A673 (cell line): ENCODE measurements at regions of chr12 and their contacts with region 1.

Region 1: GRCh38 chr12:54603173-54603814 is 14.8 kb upstream of the PPP1R1A start:
- DNase-seq: peak; percentile 94
- H3K4me3 ChIP-seq: peak overlapping the region; percentile 16
- H3K27ac ChIP-seq: peak overlapping the region; percentile 90
- H3K4me1 ChIP-seq: peaks cover 33% of the 10 kb centered on the region
- H3K27me3 ChIP-seq: no peaks in the 10 kb centered on the region
- CTCF ChIP-seq: peak; percentile 93

Region 2: DNA sequence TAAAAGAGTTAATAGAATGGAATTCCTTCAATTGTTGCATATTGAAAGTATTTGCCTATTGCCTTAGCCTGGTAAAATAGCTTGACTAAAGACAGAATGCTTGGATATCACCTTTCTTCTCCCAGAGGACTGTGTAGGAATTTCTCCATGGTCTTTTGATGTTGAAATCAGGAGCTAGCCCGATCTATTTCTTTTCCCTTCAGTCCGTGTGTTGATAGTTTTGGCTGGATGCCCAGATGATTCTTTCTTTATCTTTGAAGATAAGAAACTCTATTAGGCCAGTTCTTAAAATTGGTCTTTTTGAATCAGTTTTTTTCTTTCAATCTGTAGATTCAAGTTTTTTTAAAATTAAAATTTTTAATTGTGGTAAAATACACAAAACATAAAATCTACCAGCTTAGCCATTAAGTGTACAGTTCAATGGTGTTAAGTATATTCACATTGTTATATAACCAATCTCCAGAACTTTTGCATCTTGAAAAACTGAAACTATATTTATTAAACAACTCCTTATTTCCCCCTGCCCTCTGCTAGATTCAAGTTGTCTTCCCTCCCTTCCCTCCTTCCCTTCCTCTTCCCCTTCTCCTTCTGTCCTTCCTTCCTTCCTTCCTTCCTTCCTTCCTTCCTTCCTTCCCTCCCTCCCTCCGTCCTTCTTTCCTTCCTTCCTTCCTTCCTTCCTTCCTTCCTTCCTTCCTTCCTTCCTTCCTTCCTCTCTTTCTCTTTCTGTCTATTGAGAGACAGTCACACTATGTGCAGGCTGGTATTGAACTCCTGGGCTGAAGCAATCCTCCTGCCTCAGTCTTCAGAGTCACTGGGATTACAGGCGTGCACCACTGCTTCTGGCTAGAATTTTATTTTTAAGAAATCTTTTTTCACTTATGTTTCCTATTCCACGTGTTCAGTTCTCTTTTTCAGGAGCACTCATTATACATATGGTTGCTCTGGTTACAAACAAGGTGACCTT is 21.3 kb after region 1 on chr12:
- CTCF ChIA-PET with region 1: interaction called, 3 read pairs
- POLR2A ChIA-PET with region 1: interaction called, 3 read pairs
- intact Hi-C with region 1: loop called (anchors 1 kb)
- DNase-seq: peak; percentile 92
- H3K4me3 ChIP-seq: peak overlapping the region; percentile 4
- H3K27ac ChIP-seq: peak overlapping the region; percentile 98
- H3K4me1 ChIP-seq: peaks cover 59% of the 10 kb centered on the region
- H3K27me3 ChIP-seq: no peaks in the 10 kb centered on the region
- CTCF ChIP-seq: no peak

Region 3: DNA sequence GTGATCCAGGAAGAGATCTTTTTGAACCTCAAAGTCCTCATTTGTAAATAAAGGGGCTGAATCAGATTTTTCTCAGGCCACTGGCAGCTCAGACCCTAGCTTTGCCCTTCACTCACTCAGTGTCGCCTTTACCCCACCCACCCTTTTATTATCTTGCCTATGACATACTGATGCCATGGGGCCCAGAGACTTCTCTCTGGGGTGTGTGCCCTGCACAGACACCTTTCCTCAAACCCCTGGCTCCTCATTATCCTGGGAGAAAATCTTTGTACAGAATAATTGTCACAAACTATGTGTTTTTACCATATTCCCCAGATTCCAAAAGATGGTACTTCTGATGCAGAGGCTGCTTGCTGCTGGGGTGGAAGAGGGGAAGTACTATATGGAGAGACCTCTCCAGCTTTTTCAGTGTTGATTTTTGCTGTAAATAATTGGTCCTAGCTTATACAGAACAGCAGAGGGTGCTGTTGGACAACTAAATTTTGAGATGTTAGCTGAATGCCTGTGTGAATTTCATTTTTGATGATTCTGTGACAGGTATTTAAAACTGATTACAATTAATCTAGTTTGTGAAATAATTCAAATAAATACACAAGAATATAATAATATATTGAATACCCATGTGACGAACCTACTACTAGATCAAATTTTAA is 98.8 kb after region 1 on chr12:
- CTCF ChIA-PET with region 1: no interaction called
- POLR2A ChIA-PET with region 1: no interaction called
- intact Hi-C with region 1: loop called (anchors 5 kb)
- DNase-seq: peak; percentile 70
- H3K4me3 ChIP-seq: no peak overlapping the region
- H3K27ac ChIP-seq: no peak overlapping the region
- H3K4me1 ChIP-seq: peaks cover 13% of the 10 kb centered on the region
- H3K27me3 ChIP-seq: no peaks in the 10 kb centered on the region
- CTCF ChIP-seq: peak; percentile 77

Region 4: DNA sequence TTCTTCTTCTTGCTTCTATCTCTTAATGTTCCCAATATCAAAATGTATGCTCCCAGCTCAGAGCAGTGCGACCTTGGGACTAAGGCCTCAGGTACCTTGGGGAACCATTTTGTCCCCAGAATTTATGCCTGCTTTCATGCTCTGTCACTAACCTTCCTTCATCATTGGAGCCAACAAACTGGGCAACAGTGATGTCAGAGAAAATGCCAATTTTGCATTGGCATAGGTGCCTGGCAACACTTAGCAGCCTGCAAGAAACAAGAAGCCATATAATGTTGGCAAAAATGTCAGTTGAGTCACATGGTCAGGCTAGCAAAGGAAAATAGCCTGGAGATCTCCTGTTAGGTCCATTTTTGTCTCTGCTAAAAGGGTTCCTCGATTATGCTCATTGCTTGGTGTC is 197.3 kb after region 1 on chr12:
- CTCF ChIA-PET with region 1: no interaction called
- POLR2A ChIA-PET with region 1: no interaction called
- intact Hi-C with region 1: no loop called
- DNase-seq: no peak
- H3K4me3 ChIP-seq: no peak overlapping the region
- H3K27ac ChIP-seq: no peak overlapping the region
- H3K4me1 ChIP-seq: no peaks in the 10 kb centered on the region
- H3K27me3 ChIP-seq: no peaks in the 10 kb centered on the region
- CTCF ChIP-seq: no peak